ENCODE measurements at regions of chr16 and their contacts with region 1.

Region 1: GRCh38 chr16:82603784-82604411 is 22.9 kb upstream of the CDH13 start:
- DNase-seq: peak; percentile 65 to 66
- H3K4me3 ChIP-seq: no peak overlapping the region
- H3K4me3 Mint-ChIP-seq: no peak overlapping the region
- H3K27ac Mint-ChIP-seq: no peak overlapping the region
- H3K4me1 ChIP-seq: peaks cover 23% of the 10 kb centered on the region
- H3K4me1 Mint-ChIP-seq: peaks cover 28% of the 10 kb centered on the region
- H3K27me3 ChIP-seq: no peaks in the 10 kb centered on the region
- H3K27me3 Mint-ChIP-seq: no peaks in the 10 kb centered on the region
- CTCF ChIP-seq: peak; percentile 64 to 88

Region 2: GRCh38 chr16:82481455-82481854 is 122.4 kb before region 1 on chr16:
- CTCF ChIA-PET with region 1: no interaction called
- POLR2A ChIA-PET with region 1: no interaction called
- intact Hi-C with region 1: no loop called
- DNase-seq: no peak
- H3K4me3 ChIP-seq: no peak overlapping the region
- H3K4me3 Mint-ChIP-seq: no peak overlapping the region
- H3K27ac Mint-ChIP-seq: no peak overlapping the region
- H3K4me1 ChIP-seq: no peaks in the 10 kb centered on the region
- H3K4me1 Mint-ChIP-seq: no peaks in the 10 kb centered on the region
- H3K27me3 ChIP-seq: no peaks in the 10 kb centered on the region; the same call in 1 of the 2 replicates
- H3K27me3 Mint-ChIP-seq: peaks cover 24% of the 10 kb centered on the region
- CTCF ChIP-seq: no peak

Region 3: DNA sequence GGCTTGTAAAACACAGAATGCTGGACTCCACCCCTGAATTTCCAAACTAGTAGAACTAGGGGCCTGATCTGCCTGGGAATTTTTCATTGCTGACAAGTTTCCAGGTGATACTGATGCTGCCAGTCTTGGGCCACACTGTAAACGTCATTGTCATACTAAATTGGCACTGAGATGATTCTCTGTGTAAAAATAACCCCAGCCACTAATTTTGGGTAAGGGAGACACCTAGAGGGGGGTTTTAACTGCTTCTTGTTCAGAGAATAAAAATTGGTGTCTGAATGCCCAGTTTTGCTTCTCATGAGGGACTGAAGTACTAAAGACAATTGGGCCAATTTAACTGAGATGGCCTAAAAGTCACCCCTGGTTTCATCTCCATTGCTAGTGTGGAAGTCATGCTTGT is 17.9 kb after region 1 on chr16:
- CTCF ChIA-PET with region 1: interaction called, 3 read pairs
- POLR2A ChIA-PET with region 1: no interaction called
- intact Hi-C with region 1: loop called (anchors 1 kb)
- DNase-seq: no peak
- H3K4me3 ChIP-seq: no peak overlapping the region
- H3K4me3 Mint-ChIP-seq: no peak overlapping the region
- H3K27ac Mint-ChIP-seq: no peak overlapping the region
- H3K4me1 ChIP-seq: no peaks in the 10 kb centered on the region
- H3K4me1 Mint-ChIP-seq: peaks cover 5% of the 10 kb centered on the region
- H3K27me3 ChIP-seq: no peaks in the 10 kb centered on the region
- H3K27me3 Mint-ChIP-seq: peaks cover 15% of the 10 kb centered on the region
- CTCF ChIP-seq: peak; percentile 15 to 50

Measured in Caco-2 (cell line).